Activated naive CD4-positive, alpha-beta T cell treated with anti-CD3 and anti-CD28 coated beads for 36 hours (primary cell): ENCODE measurements at regions of chr17 and their contacts with region 1.

Region 1: DNA sequence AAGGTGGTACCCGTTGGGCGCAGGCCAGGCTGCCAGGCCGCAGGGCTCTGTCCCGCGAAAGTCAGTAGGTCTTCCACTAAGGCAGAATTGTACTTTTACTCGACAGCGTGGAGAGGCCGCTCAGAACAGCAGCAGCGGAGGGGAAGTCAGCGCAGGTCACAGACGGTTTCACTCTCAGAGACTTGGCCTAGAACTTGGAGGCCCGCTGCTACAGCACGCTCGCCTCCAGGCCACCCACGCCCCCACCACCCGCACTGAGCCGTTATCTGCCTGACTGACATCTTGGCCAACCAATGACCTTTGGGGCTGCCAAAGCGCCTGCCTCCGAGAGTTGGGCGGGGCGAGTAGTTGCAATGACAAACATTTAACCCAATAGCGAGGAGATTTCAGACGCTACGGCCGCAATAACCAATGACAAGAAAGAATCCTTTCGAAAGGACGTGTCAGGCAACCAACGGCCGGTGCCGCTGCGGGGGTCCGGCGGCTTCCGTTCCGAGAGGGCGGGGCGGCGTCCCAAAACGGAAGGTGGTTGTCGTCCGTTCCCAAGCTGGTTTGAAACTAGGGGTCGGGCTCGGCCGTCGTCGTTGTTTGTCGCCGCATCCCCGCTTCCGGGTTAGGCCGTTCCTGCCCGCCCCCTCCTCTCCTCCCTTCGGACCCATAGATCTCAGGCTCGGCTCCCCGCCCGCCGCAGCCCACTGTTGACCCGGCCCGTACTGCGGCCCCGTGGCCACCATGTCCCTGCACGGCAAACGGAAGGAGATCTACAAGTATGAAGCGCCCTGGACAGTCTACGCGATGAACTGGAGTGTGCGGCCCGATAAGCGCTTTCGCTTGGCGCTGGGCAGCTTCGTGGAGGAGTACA is at the start of gene DCAF7:
- DNase-seq: peak; percentile 100
- H3K4me3 Mint-ChIP-seq: peak within 1 kb of the TSS; percentile 82
- H3K27ac Mint-ChIP-seq: peak within 1 kb of the TSS; percentile 94
- H3K4me1 Mint-ChIP-seq: peaks cover 33% of the 10 kb centered on the region
- H3K27me3 Mint-ChIP-seq: no peaks in the 10 kb centered on the region
- total RNA-seq, gene DCAF7: 102 to 103 TPM

Region 2: GRCh38 chr17:63445979-63446691 is 104.0 kb before region 1 on chr17 and contains the start of gene CYB561:
- CTCF ChIA-PET with region 1: interaction called, 7 read pairs
- intact Hi-C with region 1: loop called (anchors 1 kb)
- DNase-seq: peak; percentile 66
- H3K4me3 Mint-ChIP-seq: peak within 1 kb of the TSS; percentile 67
- H3K27ac Mint-ChIP-seq: peak within 1 kb of the TSS; percentile 79
- H3K4me1 Mint-ChIP-seq: peaks cover 23% of the 10 kb centered on the region
- H3K27me3 Mint-ChIP-seq: no peaks in the 10 kb centered on the region
- total RNA-seq, gene CYB561: 2.3 to 2.6 TPM

Region 3: GRCh38 chr17:63476854-63477479 is 73.2 kb before region 1 on chr17 and contains the start of gene ACE:
- CTCF ChIA-PET with region 1: no interaction called
- intact Hi-C with region 1: no loop called
- DNase-seq: peak; percentile 36
- H3K4me3 Mint-ChIP-seq: peak within 1 kb of the TSS; percentile 54
- H3K27ac Mint-ChIP-seq: no peak within 1 kb of the TSS
- H3K4me1 Mint-ChIP-seq: peaks cover 5% of the 10 kb centered on the region
- H3K27me3 Mint-ChIP-seq: peaks cover 37% of the 10 kb centered on the region
- total RNA-seq, gene ACE: 0.12 to 0.50 TPM

Region 4: GRCh38 chr17:63600569-63601438 is 50.6 kb after region 1 on chr17 and contains the start of gene TACO1:
- CTCF ChIA-PET with region 1: no interaction called
- intact Hi-C with region 1: loop called (anchors 1 kb)
- DNase-seq: peak; percentile 88
- H3K4me3 Mint-ChIP-seq: peak within 1 kb of the TSS; percentile 97
- H3K27ac Mint-ChIP-seq: peak within 1 kb of the TSS; percentile 84
- H3K4me1 Mint-ChIP-seq: peaks cover 29% of the 10 kb centered on the region
- H3K27me3 Mint-ChIP-seq: no peaks in the 10 kb centered on the region
- total RNA-seq, gene TACO1: 27.6 to 28.9 TPM

Region 5: DNA sequence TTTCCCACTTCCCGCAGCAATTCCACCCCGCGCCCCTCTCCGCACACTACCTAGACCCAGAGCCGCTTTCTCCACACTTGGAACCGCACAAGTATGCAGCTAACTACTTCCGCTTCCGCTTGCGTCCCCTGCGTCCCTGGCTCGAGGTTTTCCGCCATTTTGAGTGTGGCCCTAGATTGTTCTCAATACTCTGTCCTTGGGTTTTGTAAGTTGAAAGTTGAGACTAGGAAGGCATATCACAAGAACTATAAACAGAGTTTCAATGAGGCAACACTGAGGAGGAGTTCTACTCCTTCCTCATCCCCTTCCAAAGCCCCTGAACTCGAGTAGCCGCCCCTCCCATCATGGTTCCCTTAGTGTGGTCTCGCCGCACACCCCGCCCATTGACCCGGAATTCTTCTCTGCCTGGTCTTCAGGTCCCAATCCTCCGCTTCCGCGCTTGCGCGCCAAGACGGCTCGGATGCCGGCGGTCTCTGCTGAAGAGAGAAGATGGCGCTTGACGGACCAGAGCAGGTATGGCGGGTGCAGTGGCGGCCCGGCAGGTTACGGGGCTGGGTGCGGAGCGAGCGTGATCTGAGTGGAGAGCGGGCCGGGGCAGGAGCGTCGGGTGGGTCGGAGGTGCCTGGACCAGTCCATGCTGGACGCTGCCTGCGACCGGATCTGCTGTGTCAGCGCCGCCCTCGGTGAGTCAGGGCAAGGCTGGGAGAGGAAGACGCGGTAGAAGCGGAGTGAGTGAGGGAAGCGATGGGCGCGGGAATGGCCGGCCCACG is 277.0 kb after region 1 on chr17 and contains the starts of genes FTSJ3 and PSMC5:
- CTCF ChIA-PET with region 1: no interaction called
- intact Hi-C with region 1: loop called (anchors 1 kb)
- DNase-seq: peak; percentile 97
- H3K4me3 Mint-ChIP-seq: peak within 1 kb of the TSS; percentile 96
- H3K27ac Mint-ChIP-seq: peak within 1 kb of the TSS; percentile 99
- H3K4me1 Mint-ChIP-seq: peaks cover 82% of the 10 kb centered on the region
- H3K27me3 Mint-ChIP-seq: no peaks in the 10 kb centered on the region
- total RNA-seq, gene FTSJ3: 25.3 to 26.2 TPM
- total RNA-seq, gene PSMC5: 144 to 154 TPM